Sigmoid colon (tissue), 7 donors: ENCODE measurements at regions of chr20 and their contacts with region 1.

Region 1: GRCh38 chr20:44210422-44211176 is at the start of gene OSER1:
- DNase-seq: peak; percentile 99
- H3K4me3 ChIP-seq: peak within 1 kb of the TSS; percentile 74 to 96 (median 89)
- H3K27ac ChIP-seq: peak within 1 kb of the TSS; percentile 93 to 100 (median 98)
- H3K4me1 ChIP-seq: peaks cover 0 to 60% (median 45%) of the 10 kb centered on the region in 4 donors
- H3K27me3 ChIP-seq: no peaks in the 10 kb centered on the region
- CTCF ChIP-seq: no peak
- EP300 ChIP-seq: peak in 2 of 4 donors; percentile 33 to 94
- POLR2A ChIP-seq: peak; percentile 89 to 96
- total RNA-seq, gene OSER1: 47.4 to 90.5 (median 61.5) TPM

Region 2: DNA sequence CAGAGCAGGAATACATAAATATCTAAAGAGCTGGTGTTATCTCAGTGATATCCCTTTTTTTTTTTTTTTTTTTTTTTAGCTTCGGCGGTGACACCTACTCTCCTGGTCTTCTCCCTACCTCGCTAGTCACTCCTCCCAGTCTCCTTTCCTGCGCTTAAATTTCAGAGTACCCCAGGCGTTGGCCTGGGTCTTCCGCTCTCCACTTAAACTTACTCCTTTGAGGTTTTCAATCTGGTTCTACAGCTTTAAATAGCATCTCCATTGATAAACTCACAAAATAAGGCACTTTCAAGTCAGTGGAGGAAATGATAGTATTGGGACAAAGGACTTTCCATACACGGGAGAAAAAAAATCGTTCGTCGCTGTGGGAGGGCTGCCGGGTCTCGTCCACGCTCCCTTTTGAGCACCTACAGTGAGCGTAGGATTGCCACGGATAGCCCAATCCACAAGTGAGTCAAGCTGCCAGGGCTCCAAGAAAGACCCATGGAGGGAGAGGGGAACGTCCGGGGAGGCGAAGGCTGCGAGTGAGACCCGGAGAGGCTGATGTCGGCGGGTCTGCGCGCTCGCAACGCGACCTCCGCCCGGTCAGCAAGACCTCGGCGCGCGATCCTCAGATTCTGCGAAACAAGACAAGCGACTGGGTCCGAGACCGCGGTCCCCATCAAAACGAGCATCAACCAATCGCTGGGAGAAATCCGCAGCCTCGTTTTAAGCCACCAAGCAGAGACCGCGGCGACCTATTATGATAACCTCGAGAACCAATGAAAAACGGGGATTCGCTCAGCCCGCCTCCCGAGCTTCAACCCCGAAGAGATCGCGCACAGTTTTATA is 753.6 kb before region 1 on chr20:
- intact Hi-C with region 1: loop called (anchors 10 kb)
- DNase-seq: peak; percentile 97
- H3K4me3 ChIP-seq: peak overlapping the region; percentile 86 to 98 (median 92)
- H3K27ac ChIP-seq: peak overlapping the region; percentile 99 to 100 (median 100)
- H3K4me1 ChIP-seq: peaks cover 0 to 28% (median 20%) of the 10 kb centered on the region in 4 donors
- H3K27me3 ChIP-seq: no peaks in the 10 kb centered on the region
- CTCF ChIP-seq: no peak
- EP300 ChIP-seq: no peak
- POLR2A ChIP-seq: no peak

Region 3: DNA sequence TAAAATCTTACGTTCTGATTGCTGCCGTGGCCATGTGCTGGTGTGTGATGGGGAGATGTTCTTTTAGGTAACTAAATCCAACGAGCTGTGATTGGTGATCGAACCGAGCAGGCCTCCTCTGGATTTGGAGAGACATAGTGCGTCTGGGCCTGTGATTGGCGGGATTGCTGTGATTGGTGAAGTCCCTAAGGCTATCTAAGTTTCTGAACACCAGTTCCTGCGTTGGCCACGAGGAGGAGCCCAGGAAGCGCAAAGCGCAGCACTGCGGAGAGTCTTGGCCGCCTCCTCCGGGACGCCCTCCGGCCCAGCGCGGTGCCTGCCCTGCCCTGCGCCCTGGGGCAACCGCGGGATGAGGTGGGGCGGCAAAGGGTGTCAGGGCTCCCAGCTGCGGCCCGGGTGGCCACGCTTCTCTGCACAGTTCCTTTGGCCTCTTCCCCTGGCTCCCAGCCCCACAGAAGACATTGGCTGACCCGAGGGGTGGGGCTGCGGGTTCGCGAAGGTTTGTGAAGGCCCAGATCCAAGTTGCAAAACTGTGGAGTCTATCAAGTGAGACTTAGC is 177.9 kb after region 1 on chr20:
- intact Hi-C with region 1: loop called (anchors 10 kb)
- DNase-seq: peak; percentile 71
- H3K4me3 ChIP-seq: no peak overlapping the region
- H3K27ac ChIP-seq: no peak overlapping the region
- H3K4me1 ChIP-seq: peaks cover 0 to 5% (median 2%) of the 10 kb centered on the region in 4 donors
- H3K27me3 ChIP-seq: peaks cover 0 to 49% (median 18%) of the 10 kb centered on the region in 3 donors
- CTCF ChIP-seq: peak; percentile 11 to 56 (median 53)
- EP300 ChIP-seq: no peak
- POLR2A ChIP-seq: no peak

Region 4: DNA sequence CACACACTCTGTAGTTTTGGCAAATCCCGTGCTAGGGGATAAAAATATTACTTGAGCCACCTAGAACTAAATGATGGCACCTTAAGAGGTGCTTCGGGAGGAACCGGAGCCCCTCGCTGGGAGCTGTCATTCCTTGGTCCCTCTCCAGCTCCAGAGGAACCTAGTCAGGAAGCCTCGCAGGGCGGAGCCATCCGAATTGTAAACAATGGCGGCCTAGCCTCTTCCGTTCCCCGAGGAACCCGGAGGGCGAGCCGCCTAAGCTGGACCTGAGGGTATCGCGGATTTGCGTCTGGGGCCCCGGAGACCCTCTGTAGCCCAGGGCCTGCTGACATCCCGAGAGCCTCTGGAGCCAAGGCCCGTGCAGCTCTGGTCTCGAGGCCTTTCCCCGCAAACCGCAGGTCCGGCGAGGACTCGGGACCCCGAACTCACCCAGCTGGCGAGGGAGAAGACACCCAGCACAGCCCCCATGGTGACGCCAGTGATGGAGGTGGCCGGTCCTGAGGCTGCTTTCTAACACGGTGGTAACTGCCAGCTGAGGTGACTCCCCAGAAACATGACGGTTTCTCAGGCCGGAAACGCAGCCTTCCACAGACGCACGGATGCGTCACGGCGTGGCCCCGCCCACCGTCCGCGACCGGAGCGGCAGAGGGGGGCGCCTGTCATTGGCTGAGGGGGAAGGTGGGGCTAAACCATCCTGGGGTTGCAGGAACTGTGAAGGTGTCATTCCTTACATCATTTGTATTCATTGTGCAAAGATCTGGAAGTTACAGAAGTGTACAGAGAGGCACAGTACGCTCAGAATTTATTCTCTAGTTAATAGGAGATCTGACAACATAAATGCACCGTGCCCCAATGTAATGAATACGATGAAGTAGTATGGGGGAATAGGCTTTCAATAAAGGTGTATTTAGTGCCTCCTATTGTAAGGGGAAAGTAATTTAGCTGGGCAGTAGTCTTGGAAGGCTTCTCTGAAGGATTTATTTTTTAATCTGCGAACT is 311.2 kb after region 1 on chr20 and contains the start of gene SERINC3:
- intact Hi-C with region 1: loop called (anchors 5 kb)
- DNase-seq: peak; percentile 99
- H3K4me3 ChIP-seq: peak within 1 kb of the TSS; percentile 82 to 98 (median 92)
- H3K27ac ChIP-seq: peak within 1 kb of the TSS; percentile 97 to 99 (median 98)
- H3K4me1 ChIP-seq: peaks cover 0 to 48% (median 43%) of the 10 kb centered on the region in 4 donors
- H3K27me3 ChIP-seq: no peaks in the 10 kb centered on the region
- CTCF ChIP-seq: no peak
- EP300 ChIP-seq: peak in 1 of 4 donors; percentile 47
- POLR2A ChIP-seq: peak; percentile 54 to 67
- total RNA-seq, gene SERINC3: 75.9 to 112 (median 88.8) TPM

Region 5: GRCh38 chr20:44651684-44652423 is 441.3 kb after region 1 on chr20 and contains the start of gene ADA:
- intact Hi-C with region 1: loop called (anchors 10 kb)
- DNase-seq: peak; percentile 81
- H3K4me3 ChIP-seq: peak within 1 kb of the TSS; percentile 76 to 92 (median 78)
- H3K27ac ChIP-seq: peak within 1 kb of the TSS; percentile 81 to 91 (median 88)
- H3K4me1 ChIP-seq: peaks cover 2 to 24% (median 16%) of the 10 kb centered on the region in 4 donors
- H3K27me3 ChIP-seq: no peaks in the 10 kb centered on the region
- CTCF ChIP-seq: no peak
- EP300 ChIP-seq: no peak
- POLR2A ChIP-seq: no peak
- total RNA-seq, gene ADA: 4.3 to 17.1 (median 11.7) TPM

Region 6: GRCh38 chr20:44960103-44960852 is 749.7 kb after region 1 on chr20 and contains the start of gene TOMM34:
- intact Hi-C with region 1: loop called (anchors 5 kb)
- DNase-seq: peak; percentile 97
- H3K4me3 ChIP-seq: peak within 1 kb of the TSS; percentile 60 to 96 (median 80)
- H3K27ac ChIP-seq: peak within 1 kb of the TSS; percentile 80 to 90 (median 84)
- H3K4me1 ChIP-seq: peaks cover 0 to 24% (median 18%) of the 10 kb centered on the region in 4 donors
- H3K27me3 ChIP-seq: no peaks in the 10 kb centered on the region
- CTCF ChIP-seq: no peak
- EP300 ChIP-seq: no peak
- POLR2A ChIP-seq: peak; percentile 53 to 59
- total RNA-seq, gene TOMM34: 7.2 to 9.2 (median 8.3) TPM